Pancreas (tissue), 10 donors: ENCODE measurements at regions of chr17 and their contacts with region 1.

Region 1: DNA sequence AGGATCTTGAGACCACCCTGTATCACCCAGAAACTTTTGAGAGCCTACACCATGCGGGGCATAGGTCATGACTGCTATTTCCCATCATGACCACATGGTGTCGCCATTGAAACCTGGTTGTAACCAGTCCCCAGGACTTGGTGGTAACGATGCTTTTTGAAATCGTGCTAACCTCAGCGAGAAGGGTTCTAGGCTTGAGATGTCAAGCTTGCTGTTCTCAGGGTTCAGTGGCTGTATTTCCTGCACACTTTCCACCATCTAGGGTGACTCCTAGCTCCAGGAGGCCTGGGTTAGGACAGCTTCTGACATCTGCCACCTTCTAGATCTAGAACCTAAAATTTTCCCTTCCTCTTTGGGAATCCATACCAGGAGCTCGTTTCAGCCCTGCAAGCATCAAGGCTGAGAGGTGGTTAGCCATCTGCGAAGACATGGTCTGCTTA is 13.0 kb upstream of the SPNS3 start:
- DNase-seq: peak in 3 of 6 donors; percentile 36 to 67 (median 56)
- ATAC-seq: peak; percentile 89 to 98 (median 95)
- H3K4me3 ChIP-seq: no peak overlapping the region
- H3K27ac ChIP-seq: no peak overlapping the region
- H3K4me1 ChIP-seq: no peaks in the 10 kb centered on the region
- H3K27me3 ChIP-seq: no peaks in the 10 kb centered on the region
- CTCF ChIP-seq: peak; percentile 67 to 80 (median 76)

Region 2: DNA sequence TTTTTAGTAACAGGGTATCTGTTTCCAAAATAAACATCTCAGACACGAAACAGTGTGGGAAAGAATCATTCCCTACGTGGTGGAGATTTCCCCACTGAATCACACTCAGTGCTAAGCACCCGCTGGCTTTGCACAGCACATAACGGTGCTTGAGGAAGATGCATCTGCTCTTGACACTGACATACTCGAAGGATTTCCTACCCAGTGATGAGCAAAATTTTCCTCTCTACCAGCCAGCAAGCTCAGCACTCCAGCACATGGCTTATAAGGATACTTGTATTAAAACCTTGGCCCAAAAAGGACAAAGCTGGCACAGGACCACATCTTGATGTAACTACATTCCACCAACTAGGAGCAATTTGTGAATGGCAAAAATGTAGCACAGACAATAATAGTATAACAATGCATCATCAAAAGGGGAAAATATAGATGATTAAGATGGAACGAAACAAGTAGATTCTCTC is 216.0 kb before region 1 on chr17:
- intact Hi-C with region 1: loop called in 1 of 3 experiments (anchors 5 kb)
- DNase-seq: no peak
- ATAC-seq: peak in 3 of 4 donors; percentile 38 to 49 (median 43)
- H3K4me3 ChIP-seq: no peak overlapping the region
- H3K27ac ChIP-seq: no peak overlapping the region
- H3K4me1 ChIP-seq: no peaks in the 10 kb centered on the region
- H3K27me3 ChIP-seq: no peaks in the 10 kb centered on the region
- CTCF ChIP-seq: no peak

Region 3: GRCh38 chr17:4540224-4540641 is 119.5 kb after region 1 on chr17:
- intact Hi-C with region 1: loop called in 1 of 3 experiments (anchors 10 kb)
- DNase-seq: peak in 4 of 6 donors; percentile 15 to 67 (median 46)
- ATAC-seq: peak in 2 of 4 donors; percentile 7 to 29
- H3K4me3 ChIP-seq: no peak overlapping the region
- H3K27ac ChIP-seq: peak overlapping the region in 2 of 4 donors; percentile 16 to 22
- H3K4me1 ChIP-seq: no peaks in the 10 kb centered on the region
- H3K27me3 ChIP-seq: no peaks in the 10 kb centered on the region
- CTCF ChIP-seq: no peak

Region 4: DNA sequence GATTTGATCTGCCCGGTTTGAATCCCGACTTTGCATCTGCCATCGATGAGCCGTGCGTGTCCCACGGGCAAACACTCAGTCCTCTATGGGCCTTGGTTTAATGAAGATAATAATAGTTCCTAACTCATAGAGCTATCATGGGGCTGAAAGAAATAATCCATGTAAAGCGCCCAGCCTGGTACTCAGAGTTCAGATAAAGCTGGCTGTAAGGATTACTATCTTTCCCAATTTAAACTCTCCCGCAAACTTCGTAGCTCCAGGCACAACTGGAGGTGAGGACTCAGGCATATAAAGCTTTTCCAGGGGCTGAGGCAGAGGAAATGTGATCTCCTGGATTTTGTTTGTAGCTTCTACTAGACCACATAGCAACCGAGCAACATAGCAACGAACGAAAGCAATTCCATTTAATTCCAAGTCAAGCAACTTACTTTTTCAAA is 204.5 kb after region 1 on chr17:
- intact Hi-C with region 1: loop called in 1 of 3 experiments (anchors 5 kb)
- DNase-seq: no peak
- ATAC-seq: no peak
- H3K4me3 ChIP-seq: no peak overlapping the region
- H3K27ac ChIP-seq: no peak overlapping the region
- H3K4me1 ChIP-seq: no peaks in the 10 kb centered on the region
- H3K27me3 ChIP-seq: no peaks in the 10 kb centered on the region
- CTCF ChIP-seq: no peak